Colonic mucosa (tissue), 4 donors: ENCODE measurements at regions of chr9 and their contacts with region 1.

Region 1: GRCh38 chr9:92438900-92439526 is 14.7 kb upstream of the OMD start:
- DNase-seq: no peak
- H3K4me3 ChIP-seq: no peak overlapping the region
- H3K27ac ChIP-seq: no peak overlapping the region
- H3K4me1 ChIP-seq: no peaks in the 10 kb centered on the region
- H3K27me3 ChIP-seq: no peaks in the 10 kb centered on the region
- CTCF ChIP-seq: no peak

Region 2: DNA sequence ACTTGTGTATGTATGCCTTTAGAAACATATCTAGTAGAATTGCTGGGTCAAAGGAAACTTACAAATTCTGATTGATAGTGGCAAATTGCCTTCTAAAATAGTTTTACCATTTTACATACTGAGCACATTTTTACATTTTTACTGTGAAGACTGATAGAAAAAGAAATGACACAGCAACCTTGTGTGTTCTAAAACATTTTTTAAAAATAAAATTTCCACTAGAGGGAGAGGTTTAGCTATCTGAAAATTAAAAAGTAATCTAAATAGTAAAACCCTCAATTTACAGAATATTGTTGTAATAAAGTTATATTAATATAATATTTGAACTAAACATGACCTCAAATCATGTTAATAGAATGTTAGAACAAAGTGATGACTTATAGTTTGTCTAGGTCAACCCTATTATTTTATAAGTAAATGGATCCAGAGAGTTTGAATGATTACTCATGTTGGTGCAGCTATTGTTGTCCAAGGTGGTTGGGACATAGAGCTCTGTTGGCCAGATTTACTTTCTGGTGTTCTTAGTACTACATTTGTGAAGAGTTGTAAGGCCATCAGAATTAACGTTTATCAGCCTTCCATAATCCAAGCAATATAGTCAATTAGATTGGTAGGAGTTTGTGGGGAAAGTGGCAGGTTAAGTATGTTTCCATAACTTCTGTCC is 96.1 kb before region 1 on chr9:
- intact Hi-C with region 1: loop called (anchors 5 kb)
- DNase-seq: no peak
- H3K4me3 ChIP-seq: no peak overlapping the region
- H3K27ac ChIP-seq: no peak overlapping the region
- H3K4me1 ChIP-seq: no peaks in the 10 kb centered on the region
- H3K27me3 ChIP-seq: no peaks in the 10 kb centered on the region
- CTCF ChIP-seq: no peak